ENCODE measurements at regions of chr13 and their contacts with region 1.

Region 1: DNA sequence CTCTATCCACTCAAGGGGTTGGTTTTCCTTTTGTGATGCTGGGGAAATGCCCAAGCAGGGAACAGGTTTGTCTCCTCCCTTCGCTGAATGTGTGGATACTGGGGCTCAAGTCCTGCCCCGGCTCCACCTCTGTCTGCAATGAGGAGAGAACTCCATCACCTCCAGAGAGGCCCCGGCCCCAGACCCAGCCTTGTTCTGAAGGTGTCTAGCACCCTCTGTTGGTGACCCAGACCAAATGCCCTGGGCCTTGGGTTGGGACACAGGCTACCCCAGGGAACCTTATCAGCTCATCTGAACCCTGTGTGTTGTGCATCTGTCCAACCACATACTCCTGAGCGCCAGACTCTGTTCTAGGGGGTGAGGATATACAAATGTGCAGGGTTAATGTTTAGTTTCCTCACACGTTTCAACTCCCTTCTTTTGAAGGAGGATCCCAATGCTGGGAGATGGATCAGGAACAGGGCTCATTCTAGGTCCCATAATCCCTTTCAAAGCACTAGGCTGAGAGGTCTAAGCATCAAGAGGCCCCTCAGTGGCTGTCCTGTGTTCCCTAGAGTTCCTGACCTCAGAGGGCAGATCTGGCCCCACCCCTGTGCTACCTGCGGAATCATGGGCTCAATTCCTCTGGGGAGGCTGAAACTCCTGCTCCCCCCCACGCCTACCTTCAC is 112.5 kb upstream of the SLC7A1 start:
- DNase-seq: peak in 2 of 10 donors; percentile 21 to 32

Region 2: DNA sequence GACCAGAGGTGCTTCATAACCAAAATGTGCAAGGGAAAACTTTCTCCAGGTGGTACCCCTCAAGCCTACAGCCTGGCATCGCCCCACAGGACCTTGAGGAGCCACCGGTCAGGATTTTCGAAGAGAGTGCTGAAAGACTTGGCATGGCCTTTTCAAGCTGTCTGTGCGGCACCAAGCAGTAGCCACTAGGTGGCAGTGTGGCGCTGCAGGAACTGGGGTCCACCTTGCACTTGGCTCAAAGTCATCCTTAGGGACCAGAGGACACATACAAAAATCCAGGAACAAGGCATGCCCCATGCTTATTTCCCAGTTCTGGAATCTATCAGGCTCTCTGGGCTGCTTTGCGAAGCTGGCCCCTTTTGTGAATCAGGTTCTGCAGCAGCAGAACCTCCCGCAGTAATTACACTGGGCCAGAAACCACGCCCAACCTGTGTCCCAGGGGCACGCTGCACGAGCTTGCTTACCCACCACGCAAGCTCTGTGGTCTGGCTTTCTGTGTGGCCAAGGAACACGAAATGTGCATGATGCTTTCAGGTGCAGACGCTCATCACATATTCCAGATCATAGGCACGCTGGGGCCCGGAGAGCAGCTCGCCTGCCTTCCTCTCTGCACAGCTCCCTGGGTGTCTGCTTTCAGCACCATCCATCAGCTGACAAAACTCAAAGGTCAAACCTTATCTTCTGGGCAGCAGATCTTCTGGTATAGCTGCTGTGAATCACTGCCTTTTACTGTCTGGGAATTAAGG is 199.7 kb before region 1 on chr13:
- intact Hi-C with region 1: loop called (anchors 2 kb)
- DNase-seq: peak; percentile 68 to 98 (median 90)

Region 3: DNA sequence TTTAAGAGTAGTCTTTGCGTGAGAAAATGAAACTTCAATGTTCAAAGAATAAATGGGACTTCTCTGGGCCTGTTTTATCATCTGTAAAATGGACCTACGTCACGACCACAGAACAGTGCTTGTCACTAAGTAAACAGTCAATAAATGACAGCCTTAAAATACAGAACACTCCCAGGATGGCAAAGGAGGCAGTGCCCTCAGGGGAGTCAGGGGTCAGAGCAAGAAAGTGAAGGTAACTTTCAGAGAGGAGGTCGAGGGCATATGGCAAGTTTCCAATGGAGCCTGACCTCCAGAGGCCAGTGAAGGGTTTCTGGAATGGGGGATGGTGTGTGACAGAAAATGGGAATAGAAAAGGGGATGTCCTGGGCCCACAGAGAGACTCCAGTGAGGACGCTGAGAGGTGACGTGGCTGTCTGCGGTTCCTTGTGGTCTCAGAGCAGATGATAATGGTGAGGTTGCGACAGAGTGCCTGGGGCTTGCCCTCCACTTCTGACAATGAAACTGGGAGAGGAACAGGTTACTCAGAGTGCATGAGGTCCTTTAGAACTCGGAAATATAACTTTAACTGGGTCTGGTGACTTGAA is 50.6 kb after region 1 on chr13:
- intact Hi-C with region 1: no loop called
- DNase-seq: peak in 3 of 10 donors; percentile 23 to 87 (median 34)

Measured in posterior cingulate gyrus (tissue), 11 donors.